ENCODE measurements at regions of chr6 and their contacts with region 1.

Region 1: DNA sequence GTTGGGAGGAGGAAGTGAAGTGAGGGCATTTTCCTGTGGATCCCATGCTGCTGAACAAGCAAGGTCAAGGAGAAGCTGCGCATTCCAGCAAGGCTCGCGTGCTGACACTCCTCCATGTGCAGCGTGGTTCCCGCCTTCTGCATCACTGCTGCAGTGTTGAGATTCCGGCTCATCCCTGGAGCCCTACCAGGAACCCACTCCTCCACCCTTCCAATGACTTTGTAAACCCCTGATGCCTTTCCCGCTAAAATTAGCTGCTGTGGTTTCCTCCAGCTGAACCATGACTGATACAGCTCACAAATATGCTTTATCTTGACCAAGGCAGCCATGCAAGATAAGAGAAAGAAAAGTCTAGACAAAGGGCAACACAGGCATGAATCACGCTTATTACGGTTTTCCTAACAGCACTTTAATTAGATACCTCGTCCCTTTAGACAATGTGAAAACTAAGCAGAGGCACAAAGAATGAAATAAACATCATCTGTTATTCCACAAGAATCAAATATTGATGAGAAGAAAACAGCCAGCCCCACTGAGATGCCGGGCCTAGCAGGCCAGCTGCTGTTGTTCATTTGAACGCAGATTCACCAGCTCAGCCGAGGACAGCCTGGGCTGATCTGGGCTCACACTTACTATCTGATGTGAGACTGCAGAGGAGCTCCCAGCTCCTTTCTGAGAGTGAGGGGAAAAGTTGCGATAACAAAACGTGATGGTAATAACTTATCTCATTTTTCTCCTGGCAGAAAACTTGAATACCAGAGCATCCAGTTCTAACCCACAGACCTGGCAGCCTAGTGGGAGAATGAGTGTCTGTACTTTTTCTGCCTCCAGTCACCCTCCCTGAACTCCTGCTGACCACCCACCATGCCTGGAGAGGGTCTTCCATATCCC is 14.2 kb upstream of the BNIP5 start:
- DNase-seq: no peak
- ATAC-seq: peak; percentile 26 to 85 (median 66)
- H3K4me3 ChIP-seq: no peak overlapping the region
- H3K27ac ChIP-seq: peak overlapping the region in 2 of 10 donors; percentile 39 to 71
- H3K4me1 ChIP-seq: peaks cover 0 to 32% (median 19%) of the 10 kb centered on the region in 9 donors
- H3K27me3 ChIP-seq: peaks cover 0 to 79% (median 40%) of the 10 kb centered on the region in 7 donors
- CTCF ChIP-seq: no peak

Region 2: DNA sequence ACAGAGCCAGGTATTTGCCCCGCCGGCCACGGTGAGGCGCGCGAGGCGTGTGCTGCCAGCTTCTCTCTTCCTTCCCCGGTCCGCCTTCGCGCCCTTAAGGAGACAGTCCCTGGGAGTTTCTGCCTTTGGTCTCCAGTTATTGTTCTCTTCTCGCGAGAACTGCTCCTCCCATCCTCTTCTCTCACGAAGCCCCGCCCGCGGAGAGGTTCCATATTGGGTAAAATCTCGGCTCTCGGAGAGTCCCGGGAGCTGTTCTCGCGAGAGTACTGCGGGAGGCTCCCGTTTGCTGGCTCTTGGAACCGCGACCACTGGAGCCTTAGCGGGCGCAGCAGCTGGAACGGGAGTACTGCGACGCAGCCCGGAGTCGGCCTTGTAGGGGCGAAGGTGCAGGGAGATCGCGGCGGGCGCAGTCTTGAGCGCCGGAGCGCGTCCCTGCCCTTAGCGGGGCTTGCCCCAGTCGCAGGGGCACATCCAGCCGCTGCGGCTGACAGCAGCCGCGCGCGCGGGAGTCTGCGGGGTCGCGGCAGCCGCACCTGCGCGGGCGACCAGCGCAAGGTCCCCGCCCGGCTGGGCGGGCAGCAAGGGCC is 323.3 kb before region 1 on chr6 and contains the start of gene MAPK14:
- intact Hi-C with region 1: loop called in 2 of 10 experiments (anchors 10 kb)
- DNase-seq: peak; percentile 99 to 100
- ATAC-seq: peak; percentile 96 to 98 (median 96)
- H3K4me3 ChIP-seq: peak within 1 kb of the TSS; percentile 82 to 100 (median 96)
- H3K27ac ChIP-seq: peak within 1 kb of the TSS; percentile 84 to 96 (median 94)
- H3K4me1 ChIP-seq: peaks cover 5 to 49% (median 29%) of the 10 kb centered on the region in 9 donors
- H3K27me3 ChIP-seq: peaks cover 0 to 21% (median 18%) of the 10 kb centered on the region in 7 donors
- CTCF ChIP-seq: peak; percentile 86 to 98 (median 91)
- total RNA-seq, gene MAPK14: 25.0 to 38.1 (median 29.4) TPM

Region 3: DNA sequence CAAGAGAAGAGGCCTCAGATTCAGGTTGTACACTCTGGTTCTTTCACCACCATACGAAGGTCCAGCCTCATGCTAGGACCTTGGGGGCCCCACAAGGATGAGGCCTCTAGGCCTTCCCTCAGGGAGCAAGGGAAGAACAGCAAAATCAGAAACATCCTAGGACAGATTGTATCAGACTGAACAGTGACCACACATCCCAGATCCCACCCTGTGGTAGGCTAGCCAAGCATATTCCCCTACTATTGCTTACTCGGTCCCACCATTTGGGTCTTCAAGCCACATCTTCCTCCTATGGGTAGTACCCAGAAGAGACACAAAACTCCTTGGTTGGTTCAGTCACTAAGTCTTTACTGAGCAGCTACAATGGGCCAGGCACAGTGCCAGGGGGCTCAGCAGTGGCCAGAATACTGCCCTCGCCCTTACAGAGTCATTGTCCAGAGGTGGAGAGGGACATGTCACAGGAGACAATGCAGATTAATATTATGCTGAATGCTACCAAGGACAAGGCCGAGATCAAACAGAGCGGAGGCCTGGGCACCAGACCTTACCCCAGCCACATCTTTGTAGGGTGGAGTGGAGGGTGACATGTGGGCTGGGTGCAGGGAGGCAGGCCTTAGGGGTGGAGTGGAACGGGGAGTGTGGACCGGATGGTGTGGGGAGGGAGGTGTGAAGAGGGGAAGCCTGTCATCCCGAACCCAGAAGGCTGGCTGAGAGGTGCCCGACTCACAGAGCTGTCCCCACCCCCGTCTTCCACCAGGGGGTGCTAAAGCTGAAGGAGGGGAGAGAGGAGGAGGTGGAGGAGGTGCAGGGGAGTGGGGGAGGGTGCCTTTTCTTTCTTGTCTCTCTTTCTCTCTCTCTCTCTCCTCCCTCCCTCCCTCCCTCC is 227.4 kb before region 1 on chr6:
- intact Hi-C with region 1: loop called in 4 of 10 experiments (anchors 5 to 10 kb)
- DNase-seq: peak; percentile 73 to 76
- ATAC-seq: peak; percentile 72 to 85 (median 82)
- H3K4me3 ChIP-seq: no peak overlapping the region
- H3K27ac ChIP-seq: peak overlapping the region in 1 of 10 donors; percentile 66
- H3K4me1 ChIP-seq: peaks cover 0 to 90% (median 14%) of the 10 kb centered on the region in 9 donors
- H3K27me3 ChIP-seq: peaks cover 0 to 8% (median under 1%) of the 10 kb centered on the region in 7 donors
- CTCF ChIP-seq: peak; percentile 42 to 70 (median 60)

Region 4: DNA sequence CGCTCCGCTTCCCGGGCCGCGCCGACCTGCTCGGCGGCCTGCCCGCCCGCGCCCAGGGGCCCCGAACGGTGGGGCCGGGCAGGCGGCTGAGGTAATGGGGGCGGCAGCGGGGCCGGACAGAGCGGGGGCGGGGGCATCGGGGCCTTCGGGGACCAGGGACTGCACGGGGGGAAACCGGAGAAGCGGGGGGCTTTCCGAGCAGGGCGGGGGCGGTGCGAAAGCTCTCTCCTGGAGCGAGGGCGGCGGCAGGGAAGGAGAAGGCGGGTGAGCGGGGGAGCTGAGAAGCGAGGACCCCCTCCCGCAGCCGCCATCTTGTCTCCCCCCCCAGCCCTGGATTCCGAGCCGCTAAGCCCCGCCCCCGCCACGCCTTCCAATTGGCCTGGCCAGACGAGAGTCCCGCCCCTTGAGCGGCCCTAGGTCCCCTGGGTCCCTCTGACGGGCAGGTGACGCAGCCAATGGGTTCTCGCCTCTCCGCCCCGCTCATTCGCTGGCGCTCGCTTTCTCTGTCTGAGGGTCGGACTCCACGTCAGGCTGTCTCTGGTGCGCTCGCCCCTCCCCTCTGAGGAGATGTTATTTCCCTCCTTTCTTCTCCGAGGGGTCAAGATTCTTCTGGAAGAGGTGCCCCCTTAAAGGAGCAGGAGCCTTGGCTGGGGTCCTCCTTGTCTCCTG is 153.9 kb before region 1 on chr6:
- intact Hi-C with region 1: no loop called
- DNase-seq: peak; percentile 99 to 100
- ATAC-seq: peak; percentile 97 to 100 (median 98)
- H3K4me3 ChIP-seq: peak overlapping the region; percentile 40 to 93 (median 71)
- H3K27ac ChIP-seq: peak overlapping the region; percentile 92 to 98 (median 96)
- H3K4me1 ChIP-seq: peaks cover 5 to 31% (median 14%) of the 10 kb centered on the region in 9 donors
- H3K27me3 ChIP-seq: no peaks in the 10 kb centered on the region
- CTCF ChIP-seq: no peak

Measured in heart right ventricle (tissue), 16 donors.